ENCODE measurements at regions of chr19 and their contacts with region 1.

Region 1: GRCh38 chr19:58097781-58098681 is at the start of gene ZSCAN18:
- DNase-seq: peak; percentile 99
- H3K4me3 ChIP-seq: peak within 1 kb of the TSS; percentile 70 to 97 (median 76)
- H3K27ac ChIP-seq: peak within 1 kb of the TSS; percentile 91 to 96 (median 94)
- H3K4me1 ChIP-seq: peaks cover 19 to 29% (median 27%) of the 10 kb centered on the region in 4 donors
- H3K27me3 ChIP-seq: no peaks in the 10 kb centered on the region
- CTCF ChIP-seq: no peak
- EP300 ChIP-seq: no peak
- POLR2A ChIP-seq: peak; percentile 42
- total RNA-seq, gene ZSCAN18: 93.0 to 141 (median 124) TPM

Region 2: GRCh38 chr19:58009666-58010371 is 88.2 kb before region 1 on chr19:
- intact Hi-C with region 1: loop called (anchors 10 kb)
- DNase-seq: no peak
- H3K4me3 ChIP-seq: peak overlapping the region; percentile 43 to 64 (median 52)
- H3K27ac ChIP-seq: peak overlapping the region; percentile 58 to 90 (median 68)
- H3K4me1 ChIP-seq: peaks cover 5 to 18% (median 12%) of the 10 kb centered on the region in 4 donors
- H3K27me3 ChIP-seq: no peaks in the 10 kb centered on the region
- CTCF ChIP-seq: no peak
- EP300 ChIP-seq: no peak
- POLR2A ChIP-seq: no peak